H1 (cell line): ENCODE measurements at regions of chr19 and their contacts with region 1.

Region 1: DNA sequence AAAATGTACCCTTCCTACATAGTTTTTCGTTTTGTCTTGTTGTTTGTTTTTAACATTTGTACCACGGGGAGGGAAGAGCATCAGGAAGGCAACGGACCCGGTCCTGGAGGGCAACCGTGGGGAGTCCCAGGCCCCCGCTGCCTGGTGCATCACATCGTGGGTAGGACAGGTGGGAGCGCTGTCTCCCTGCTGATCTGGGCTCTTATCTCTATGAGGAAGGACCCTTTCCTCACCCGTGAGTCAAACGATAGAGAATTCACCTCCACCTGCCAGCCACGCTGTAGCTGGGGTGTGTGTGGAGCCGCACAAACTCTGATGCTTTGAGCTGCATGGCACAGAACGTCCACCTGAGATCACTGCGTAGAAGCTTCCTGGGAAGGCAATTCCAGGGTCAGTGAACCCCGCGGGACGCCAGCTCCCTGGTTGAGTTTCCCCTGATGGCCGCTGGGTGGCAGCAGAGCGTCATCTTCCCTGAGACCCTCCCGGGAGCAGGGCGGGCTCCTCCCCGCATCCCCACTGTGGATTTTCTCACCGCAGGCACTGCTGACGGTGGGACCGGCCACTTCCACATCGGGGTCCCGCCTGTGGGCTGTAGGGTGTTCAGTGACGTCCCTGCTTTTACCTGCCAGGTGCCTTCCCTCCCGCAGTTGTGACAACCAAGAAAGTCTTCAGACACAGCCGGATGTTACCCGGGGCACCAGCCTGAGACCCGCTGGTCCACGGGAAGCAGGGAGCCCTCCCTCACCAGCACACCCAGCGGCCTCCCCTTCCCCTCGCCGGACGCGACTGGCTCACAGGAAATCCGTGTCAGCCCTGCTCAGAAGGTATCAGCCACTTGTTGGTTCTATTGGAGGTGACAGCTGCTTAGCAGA is 54.7 kb downstream of the ZNF787 start:
- DNase-seq: peak in 1 of 2 experiments; percentile 94
- H3K4me3 ChIP-seq: peak overlapping the region in 2 of 4 experiments; percentile 5 to 48; a peak in 4 of 8 replicates
- H3K27ac ChIP-seq: no peak overlapping the region
- H3K4me1 ChIP-seq: peaks cover 0 to 3% (median 0%) of the 10 kb centered on the region in 4 experiments; a peak in 2 of 7 replicates
- H3K27me3 ChIP-seq: no peaks in the 10 kb centered on the region; a peak in 1 of 7 replicates
- CTCF ChIP-seq: peak; percentile 84 to 93 (median 89)
- EP300 ChIP-seq: no peak
- POLR2A ChIP-seq: no peak
- RAD21 ChIP-seq: peak; percentile 83

Region 2: DNA sequence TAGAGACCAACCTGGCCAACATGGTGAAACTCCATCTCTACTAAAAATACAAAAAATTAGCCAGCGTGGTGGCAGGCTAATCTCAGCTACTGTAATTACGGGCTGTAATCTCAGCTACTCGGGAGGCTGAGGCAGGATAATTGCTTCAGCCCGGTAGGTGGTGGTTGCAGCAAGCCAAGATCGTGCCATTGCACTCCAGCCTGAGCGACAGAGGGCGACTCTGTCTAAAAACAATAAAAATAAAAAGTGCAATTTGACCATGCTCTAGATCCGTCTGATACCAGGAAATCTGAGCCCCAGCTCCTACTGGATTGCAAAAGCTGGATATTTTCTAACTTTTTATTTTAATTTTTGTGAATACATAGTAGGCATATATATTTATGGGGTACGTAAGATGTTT is 99.8 kb before region 1 on chr19:
- CTCF ChIA-PET with region 1: no interaction called
- POLR2A ChIA-PET with region 1: no interaction called
- DNase-seq: no peak
- H3K4me3 ChIP-seq: no peak overlapping the region
- H3K27ac ChIP-seq: no peak overlapping the region
- H3K4me1 ChIP-seq: no peaks in the 10 kb centered on the region
- H3K27me3 ChIP-seq: no peaks in the 10 kb centered on the region
- CTCF ChIP-seq: no peak
- EP300 ChIP-seq: no peak
- POLR2A ChIP-seq: no peak
- RAD21 ChIP-seq: no peak

Region 3: DNA sequence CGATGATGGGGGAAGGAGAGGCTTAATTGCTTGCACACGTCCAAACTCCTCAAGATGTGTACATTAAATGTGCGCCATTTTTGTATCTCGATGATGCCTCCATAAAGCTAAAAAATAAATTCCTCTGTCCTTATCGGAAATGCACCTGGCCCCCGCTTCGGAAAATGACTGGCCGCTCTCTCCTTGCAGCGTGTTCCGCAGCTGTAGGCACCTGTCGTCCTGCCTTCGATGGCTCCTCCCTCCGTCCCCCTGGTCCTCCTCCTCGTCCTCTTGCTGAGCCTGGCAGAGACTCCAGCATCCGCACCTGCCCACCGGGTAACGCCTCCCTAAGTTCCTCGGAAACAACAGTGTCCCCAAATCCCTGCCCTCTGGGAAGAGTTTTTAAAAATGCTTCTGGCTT is 110.5 kb after region 1 on chr19:
- CTCF ChIA-PET with region 1: interaction called, 11 read pairs
- POLR2A ChIA-PET with region 1: no interaction called
- DNase-seq: no peak
- H3K4me3 ChIP-seq: no peak overlapping the region
- H3K27ac ChIP-seq: no peak overlapping the region
- H3K4me1 ChIP-seq: peaks cover 0 to 3% (median 0%) of the 10 kb centered on the region in 4 experiments; a peak in 1 of 7 replicates
- H3K27me3 ChIP-seq: no peaks in the 10 kb centered on the region; a peak in 1 of 7 replicates
- CTCF ChIP-seq: no peak
- EP300 ChIP-seq: no peak
- POLR2A ChIP-seq: no peak
- RAD21 ChIP-seq: no peak

Region 4: DNA sequence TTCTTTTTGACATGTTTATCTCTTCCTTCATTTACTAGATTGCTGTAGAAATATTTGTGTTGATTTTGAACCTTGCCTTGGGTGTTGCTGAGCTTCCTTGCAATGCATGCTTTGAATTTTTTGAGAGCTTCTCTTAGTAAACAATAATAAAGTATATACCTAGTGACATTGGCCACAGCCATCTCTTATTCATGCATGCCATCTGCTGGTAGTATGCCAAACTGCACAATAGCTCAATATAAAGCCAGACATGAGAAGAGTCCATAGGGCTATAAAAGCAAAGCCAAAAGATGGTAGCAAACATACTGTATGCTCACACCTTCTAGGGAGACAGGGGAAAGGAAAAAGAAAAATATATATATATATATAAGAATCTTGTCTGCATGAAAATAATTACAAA is 267.1 kb after region 1 on chr19:
- CTCF ChIA-PET with region 1: interaction called, 11 read pairs
- POLR2A ChIA-PET with region 1: no interaction called
- DNase-seq: peak in 1 of 2 experiments; percentile 49
- H3K4me3 ChIP-seq: no peak overlapping the region
- H3K27ac ChIP-seq: no peak overlapping the region
- H3K4me1 ChIP-seq: no peaks in the 10 kb centered on the region
- H3K27me3 ChIP-seq: no peaks in the 10 kb centered on the region
- CTCF ChIP-seq: peak in 2 of 3 experiments; percentile 59 to 61; a peak in 3 of 4 replicates
- EP300 ChIP-seq: no peak
- POLR2A ChIP-seq: no peak
- RAD21 ChIP-seq: peak; percentile 81